OCI-LY7 (cell line): ENCODE measurements at regions of chr5 and their contacts with region 1.

Region 1: GRCh38 chr5:142713121-142713706 is 27.3 kb upstream of the FGF1 start:
- DNase-seq: peak; percentile 90
- H3K4me3 ChIP-seq: peak overlapping the region; percentile 68
- H3K27ac ChIP-seq: no peak overlapping the region
- H3K4me1 ChIP-seq: peaks cover 5% of the 10 kb centered on the region
- CTCF ChIP-seq: peak; percentile 100

Region 2: DNA sequence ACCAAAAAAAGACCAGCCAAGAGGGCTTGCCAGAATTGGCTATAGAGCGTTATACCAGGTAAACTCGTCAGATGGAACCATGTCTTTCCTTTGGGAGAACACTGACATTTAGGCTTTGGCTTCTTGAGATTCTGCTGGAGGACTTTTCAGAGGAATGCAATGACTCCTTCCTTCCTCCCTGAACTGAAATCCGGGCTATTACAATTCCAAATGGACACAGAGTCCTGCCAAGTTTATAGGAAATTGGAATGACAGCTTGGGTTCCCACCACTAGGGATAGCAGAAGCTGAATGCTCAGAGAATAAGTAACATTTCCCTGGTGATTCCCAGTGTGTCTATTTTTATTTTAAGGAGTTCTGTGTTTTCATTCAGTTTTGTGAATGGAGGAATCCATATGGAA is 170.3 kb before region 1 on chr5:
- CTCF ChIA-PET with region 1: no interaction called
- POLR2A ChIA-PET with region 1: no interaction called
- intact Hi-C with region 1: no loop called
- DNase-seq: no peak
- H3K4me3 ChIP-seq: no peak overlapping the region
- H3K27ac ChIP-seq: no peak overlapping the region
- H3K4me1 ChIP-seq: no peaks in the 10 kb centered on the region
- CTCF ChIP-seq: no peak

Region 3: DNA sequence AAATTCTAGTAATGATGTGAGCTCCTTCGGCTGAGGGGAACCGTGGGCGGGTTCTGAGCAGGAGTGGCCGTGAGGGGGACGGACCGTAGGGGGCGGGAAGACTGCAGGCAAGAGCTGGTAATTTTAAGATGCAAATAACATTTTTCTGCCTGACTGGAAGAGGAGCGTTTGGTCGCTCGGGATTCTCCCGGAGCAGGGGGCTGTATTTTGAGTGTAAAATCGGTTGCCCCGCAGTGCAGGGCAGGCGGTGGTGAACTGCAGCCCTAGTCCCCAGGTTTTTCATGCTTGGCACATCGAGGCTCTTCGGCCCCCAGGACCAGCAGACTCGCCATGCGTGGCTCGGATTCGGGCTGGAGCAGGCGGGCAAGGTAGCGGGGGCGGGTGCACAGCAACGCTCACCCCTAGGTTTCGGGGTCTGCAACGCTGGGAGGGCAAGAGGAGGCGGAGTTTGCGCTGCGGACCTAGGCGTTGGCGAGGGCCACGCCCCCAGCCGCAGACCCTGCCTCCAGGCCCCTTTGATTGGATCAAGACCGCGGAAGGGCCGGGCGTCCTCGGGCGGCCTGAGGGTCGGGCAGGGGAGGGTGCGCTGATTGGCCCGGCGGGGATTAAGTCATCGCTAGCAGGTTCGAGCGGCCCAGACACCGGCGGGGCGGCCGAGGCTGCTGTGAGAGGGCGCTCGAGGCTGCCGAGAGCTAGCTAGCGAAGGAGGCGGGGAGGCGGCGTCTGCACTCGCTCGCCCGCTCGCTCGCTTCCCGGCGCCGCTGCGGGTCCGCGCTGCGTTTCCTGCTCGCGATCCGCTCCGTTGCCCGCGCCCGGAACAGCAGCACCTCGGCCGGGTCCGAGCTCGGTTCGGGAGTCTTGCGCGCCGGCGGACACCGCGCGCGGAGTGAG is 56.8 kb after region 1 on chr5 and contains the start of gene ARHGAP26:
- CTCF ChIA-PET with region 1: interaction called, 5 read pairs
- POLR2A ChIA-PET with region 1: no interaction called
- intact Hi-C with region 1: loop called (anchors 2 kb)
- DNase-seq: peak; percentile 96
- H3K4me3 ChIP-seq: peak within 1 kb of the TSS; percentile 76
- H3K27ac ChIP-seq: peak within 1 kb of the TSS; percentile 35
- H3K4me1 ChIP-seq: peaks cover 15% of the 10 kb centered on the region
- CTCF ChIP-seq: no peak
- total RNA-seq, gene ARHGAP26: 7.0 and 7.5 TPM in 2 replicates

Region 4: GRCh38 chr5:142872795-142873194 is 159.6 kb after region 1 on chr5:
- CTCF ChIA-PET with region 1: interaction called, 4 read pairs
- POLR2A ChIA-PET with region 1: no interaction called
- intact Hi-C with region 1: loop called (anchors 1 kb)
- DNase-seq: no peak
- H3K4me3 ChIP-seq: no peak overlapping the region
- H3K27ac ChIP-seq: no peak overlapping the region
- H3K4me1 ChIP-seq: no peaks in the 10 kb centered on the region
- CTCF ChIP-seq: no peak

Region 5: DNA sequence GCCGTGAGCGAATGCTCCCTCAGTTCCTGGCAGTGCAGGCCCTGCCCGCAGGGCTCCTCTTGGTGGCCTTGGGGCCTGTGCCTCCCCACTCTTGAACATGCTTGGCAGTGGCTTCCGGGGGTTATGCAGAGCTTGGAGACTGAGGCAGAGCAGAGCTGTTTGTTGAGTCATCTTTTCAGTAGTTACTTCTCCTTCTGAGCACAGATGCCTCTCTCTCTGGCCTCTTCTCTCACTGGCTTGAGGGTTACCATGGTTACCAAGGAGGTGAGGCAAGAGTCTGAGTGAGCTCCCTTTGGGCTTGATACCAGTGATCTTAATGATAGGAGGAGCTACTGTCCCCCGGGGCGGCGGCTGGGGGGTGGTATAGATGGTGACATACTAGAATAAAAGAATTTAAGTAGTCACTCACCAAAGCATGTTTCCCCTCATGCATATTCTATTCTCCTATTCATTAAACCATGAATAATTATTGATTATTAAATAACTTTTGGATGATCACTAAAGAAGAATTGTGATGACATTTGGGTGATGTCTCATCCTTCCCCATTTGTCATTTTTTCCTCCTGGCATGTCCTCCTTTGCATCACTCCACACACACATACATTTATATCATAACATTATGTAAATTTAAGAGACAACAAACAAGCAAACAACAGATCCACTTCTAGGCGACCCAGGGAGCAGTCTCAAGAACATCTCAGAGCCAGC is 168.0 kb after region 1 on chr5:
- CTCF ChIA-PET with region 1: no interaction called
- POLR2A ChIA-PET with region 1: interaction called, 6 read pairs
- intact Hi-C with region 1: loop called (anchors 1 kb)
- DNase-seq: peak; percentile 23
- H3K4me3 ChIP-seq: no peak overlapping the region
- H3K27ac ChIP-seq: no peak overlapping the region
- H3K4me1 ChIP-seq: no peaks in the 10 kb centered on the region
- CTCF ChIP-seq: no peak

Region 6: GRCh38 chr5:142888469-142889085 is 175.4 kb after region 1 on chr5:
- CTCF ChIA-PET with region 1: interaction called, 8 read pairs
- POLR2A ChIA-PET with region 1: no interaction called
- intact Hi-C with region 1: loop called (anchors 1 kb)
- DNase-seq: peak; percentile 42
- H3K4me3 ChIP-seq: no peak overlapping the region
- H3K27ac ChIP-seq: no peak overlapping the region
- H3K4me1 ChIP-seq: no peaks in the 10 kb centered on the region
- CTCF ChIP-seq: peak; percentile 93

Region 7: DNA sequence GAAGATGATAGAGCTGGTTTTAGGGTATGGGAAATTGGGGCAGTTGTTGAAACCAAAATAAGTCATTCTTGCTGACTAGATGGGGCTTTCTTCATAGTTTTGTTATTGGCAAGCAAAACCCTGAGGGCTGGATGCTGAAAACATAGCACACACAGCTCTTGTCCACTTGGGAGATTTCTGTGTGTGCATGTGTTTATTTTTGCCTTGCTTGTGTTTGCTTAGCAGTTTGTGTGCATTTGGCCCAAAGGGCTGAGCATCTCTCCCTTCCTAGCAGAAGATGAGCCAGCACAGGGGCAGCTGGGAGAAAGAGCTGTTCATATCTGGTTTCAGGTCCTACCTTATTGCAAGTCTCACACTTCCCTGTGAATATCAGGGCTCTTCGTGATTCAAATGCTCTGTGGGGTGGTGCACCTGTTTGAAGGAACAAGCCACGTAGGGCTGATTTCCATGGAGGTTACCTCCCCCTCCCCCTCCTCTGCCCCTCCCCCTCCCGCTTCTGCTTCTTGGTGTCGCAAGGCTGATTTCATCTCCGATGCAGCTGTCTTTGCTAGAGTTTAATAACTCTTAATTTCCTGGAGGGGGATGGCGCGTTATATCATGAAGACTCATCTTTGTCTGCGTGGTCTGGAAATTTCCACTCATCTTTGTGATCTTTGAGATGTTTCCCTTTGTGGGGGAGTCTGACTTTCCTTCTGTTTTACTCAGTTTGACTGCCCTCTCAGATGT is 353.5 kb after region 1 on chr5:
- CTCF ChIA-PET with region 1: no interaction called
- POLR2A ChIA-PET with region 1: no interaction called
- intact Hi-C with region 1: no loop called
- DNase-seq: peak; percentile 63
- H3K4me3 ChIP-seq: no peak overlapping the region
- H3K27ac ChIP-seq: no peak overlapping the region
- H3K4me1 ChIP-seq: peaks cover 16% of the 10 kb centered on the region
- CTCF ChIP-seq: no peak